T-cell (primary cell): ENCODE measurements at regions of chr22 and their contacts with region 1.

Region 1: GRCh38 chr22:35601743-35602630 is 15.1 kb downstream of the MB start:
- DNase-seq: peak in 1 of 35 experiments; percentile 26
- ATAC-seq: no peak
- H3K4me3 ChIP-seq: no peak overlapping the region
- H3K4me3 Mint-ChIP-seq: no peak overlapping the region
- H3K27ac ChIP-seq: no peak overlapping the region
- H3K27ac Mint-ChIP-seq: no peak overlapping the region
- H3K4me1 ChIP-seq: no peaks in the 10 kb centered on the region
- H3K4me1 Mint-ChIP-seq: no peaks in the 10 kb centered on the region
- H3K27me3 ChIP-seq: peaks cover 0 to 17% of the 10 kb centered on the region in 2 experiments
- H3K27me3 Mint-ChIP-seq: peaks cover 7% of the 10 kb centered on the region in 2 donors

Region 2: GRCh38 chr22:35510481-35510934 is 91.5 kb before region 1 on chr22:
- CTCF ChIA-PET with region 1: no interaction called
- POLR2A ChIA-PET with region 1: no interaction called
- DNase-seq: no peak
- ATAC-seq: no peak
- H3K4me3 ChIP-seq: no peak overlapping the region
- H3K4me3 Mint-ChIP-seq: no peak overlapping the region
- H3K27ac ChIP-seq: no peak overlapping the region
- H3K27ac Mint-ChIP-seq: no peak overlapping the region
- H3K4me1 ChIP-seq: no peaks in the 10 kb centered on the region
- H3K4me1 Mint-ChIP-seq: no peaks in the 10 kb centered on the region
- H3K27me3 ChIP-seq: peaks cover 0 to 21% of the 10 kb centered on the region in 2 experiments
- H3K27me3 Mint-ChIP-seq: peaks cover 15 to 28% of the 10 kb centered on the region in 2 donors

Region 3: DNA sequence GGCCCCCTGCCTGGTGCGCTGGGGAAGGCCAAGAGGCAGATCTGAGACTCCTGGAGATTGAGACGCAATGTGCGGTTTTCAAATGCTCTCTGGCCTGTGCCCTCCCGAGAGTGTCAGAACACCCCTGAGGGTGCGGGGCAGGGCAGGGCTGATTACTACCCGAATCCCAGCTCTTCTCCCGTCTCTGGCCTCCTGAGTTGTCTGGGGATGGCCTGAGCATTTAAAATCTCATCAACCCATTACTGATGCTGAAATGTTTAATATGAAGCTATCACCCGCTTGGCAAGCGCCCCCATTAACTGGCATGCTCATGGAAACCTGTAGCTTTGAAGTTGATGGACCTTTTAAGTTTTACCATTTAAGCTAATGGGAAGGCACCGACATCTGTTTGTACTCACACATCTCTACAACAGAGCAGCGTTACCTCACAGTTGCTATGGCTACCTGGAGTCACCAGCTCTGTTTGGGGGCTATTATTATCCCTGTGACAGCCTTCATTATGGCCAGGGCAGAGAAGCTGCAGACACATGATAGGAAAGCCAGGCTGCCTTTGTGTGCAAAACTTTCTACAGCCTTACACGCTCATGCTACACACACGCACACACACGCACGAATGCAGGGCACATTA is 18.8 kb after region 1 on chr22:
- CTCF ChIA-PET with region 1: no interaction called
- POLR2A ChIA-PET with region 1: interaction called in 1 of 2 experiments, 12 read pairs
- DNase-seq: no peak
- ATAC-seq: no peak
- H3K4me3 ChIP-seq: no peak overlapping the region
- H3K4me3 Mint-ChIP-seq: no peak overlapping the region
- H3K27ac ChIP-seq: no peak overlapping the region
- H3K27ac Mint-ChIP-seq: no peak overlapping the region
- H3K4me1 ChIP-seq: peaks cover 2 to 7% of the 10 kb centered on the region in 2 experiments
- H3K4me1 Mint-ChIP-seq: peaks cover 2 to 14% (median 6%) of the 10 kb centered on the region in 3 donors
- H3K27me3 ChIP-seq: peaks cover 0 to 17% of the 10 kb centered on the region in 2 experiments
- H3K27me3 Mint-ChIP-seq: peaks cover 9 to 12% of the 10 kb centered on the region in 2 donors